ENCODE measurements at regions of chr10 and their contacts with region 1.

Region 1: DNA sequence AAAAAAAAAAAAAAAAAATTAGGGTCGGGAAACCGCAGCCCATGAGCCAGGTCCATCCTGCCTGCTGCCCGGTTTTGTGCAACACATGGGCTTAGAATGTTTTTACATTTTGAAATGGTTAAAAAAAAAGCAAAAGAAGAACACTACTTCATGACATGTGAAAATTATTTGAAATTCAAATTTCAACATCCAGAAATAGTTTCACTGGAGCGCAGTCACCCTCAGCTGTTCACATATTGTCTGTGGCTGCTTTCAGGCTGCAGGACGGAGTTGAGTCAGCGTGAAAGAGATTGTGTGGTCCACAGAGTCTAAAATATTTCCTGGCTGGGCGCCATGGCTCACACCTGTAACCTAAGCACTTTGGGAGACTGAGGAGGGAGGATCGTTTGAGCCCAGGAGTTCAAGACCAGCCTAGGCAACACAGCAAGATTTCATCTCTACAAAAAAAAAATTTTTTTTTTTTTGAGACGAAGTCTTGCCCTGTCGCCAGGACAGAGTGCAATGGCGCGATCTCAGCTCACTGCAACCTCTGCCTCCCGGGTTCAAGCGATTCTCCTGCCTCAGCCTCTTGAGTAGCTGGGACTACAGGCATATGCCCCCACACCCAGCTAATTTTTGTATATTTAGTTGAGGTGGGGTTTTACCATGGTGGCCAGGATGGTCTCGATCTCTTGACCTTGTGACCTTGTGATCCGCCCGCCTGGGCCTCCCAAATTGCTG is 63.9 kb upstream of the ECHDC3 start:
- DNase-seq: no peak
- ATAC-seq: no peak

Region 2: GRCh38 chr10:11204351-11204942 is 473.8 kb before region 1 on chr10:
- intact Hi-C with region 1: loop called (anchors 5 kb)
- DNase-seq: no peak
- ATAC-seq: peak; percentile 17

Region 3: DNA sequence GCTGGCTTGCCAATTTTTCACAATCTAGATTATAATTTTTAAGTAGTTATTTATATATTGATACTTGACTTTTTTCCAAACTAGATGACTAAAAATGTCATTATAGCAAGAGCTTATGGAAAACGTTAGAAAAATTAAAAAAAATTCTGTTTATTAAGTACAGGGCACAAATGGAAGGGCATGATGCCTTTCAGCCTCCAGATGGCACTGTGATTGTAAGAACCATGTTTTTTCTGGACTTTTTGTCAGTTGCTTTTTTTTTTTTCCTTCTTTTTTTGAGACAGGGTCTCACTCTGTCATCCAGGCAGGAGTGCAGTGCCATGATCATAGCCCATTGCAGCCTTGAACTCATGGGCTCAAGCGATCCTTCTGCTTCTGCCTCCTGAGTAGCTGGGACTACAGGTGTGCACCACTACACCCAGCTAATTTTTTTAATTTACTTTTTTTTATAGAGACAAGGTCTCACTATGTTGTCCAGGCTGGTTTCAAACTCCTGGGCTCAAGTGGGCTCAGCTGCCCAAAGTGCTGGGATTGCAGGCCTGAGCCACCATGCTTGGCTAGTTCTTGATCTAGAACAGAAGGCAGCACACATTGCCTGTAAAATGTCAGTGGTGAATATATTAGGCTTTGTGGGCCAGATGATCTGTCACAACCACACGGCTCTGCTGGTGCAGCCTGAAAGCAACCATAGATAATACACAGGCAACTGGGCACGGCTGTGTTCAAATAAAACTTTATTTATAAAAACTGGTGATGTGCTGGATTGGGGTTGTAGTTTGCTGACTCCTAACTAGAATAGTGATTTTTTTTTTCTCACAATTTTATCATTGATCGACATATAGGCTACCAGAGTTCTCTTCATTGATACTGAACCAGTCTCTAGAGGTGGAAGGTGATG is 1528.6 kb after region 1 on chr10:
- intact Hi-C with region 1: loop called (anchors 5 kb)
- DNase-seq: no peak
- ATAC-seq: no peak